AG04450 (cell line): ENCODE measurements at regions of chr6 and their contacts with region 1.

Region 1: DNA sequence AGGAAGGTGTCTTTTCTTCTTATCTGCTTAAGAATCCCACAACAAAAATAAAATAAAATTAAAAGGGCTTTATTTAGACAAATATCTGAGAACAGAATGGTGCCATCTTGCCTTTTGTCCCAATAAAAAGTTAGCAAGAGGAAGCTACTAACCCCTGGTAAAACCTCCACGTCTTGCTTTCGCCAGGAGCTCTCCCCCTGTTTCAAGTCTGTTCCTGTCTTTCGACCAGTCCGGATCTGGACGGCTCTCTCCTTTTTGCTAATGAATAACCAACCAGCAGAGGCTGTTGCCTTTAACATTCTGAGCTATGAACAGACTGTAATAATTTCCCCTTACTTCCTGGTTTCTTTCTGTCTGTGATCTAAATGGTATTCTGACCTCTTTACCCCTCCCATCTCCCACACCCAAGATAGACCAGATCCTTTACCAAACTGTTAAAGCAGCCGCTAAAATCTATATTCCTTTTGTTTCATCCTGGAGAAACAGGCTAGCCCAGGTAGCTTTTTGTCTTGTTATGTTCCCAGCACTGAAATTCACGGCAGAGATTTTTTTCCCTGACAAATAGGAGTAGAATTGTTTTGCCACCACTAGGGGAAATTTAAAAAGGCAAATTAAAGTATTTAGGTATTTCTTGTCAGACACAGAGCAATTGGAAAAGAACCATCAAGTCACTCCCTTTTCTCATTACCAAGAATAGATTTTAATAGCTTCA is at the start of gene FRK:
- DNase-seq: no peak
- H3K4me3 ChIP-seq: peak within 1 kb of the TSS; percentile 49
- H3K27ac ChIP-seq: peak within 1 kb of the TSS; percentile 47
- H3K27me3 ChIP-seq: no peaks in the 10 kb centered on the region
- CTCF ChIP-seq: peak; percentile 52
- polyA plus RNA-seq, gene FRK: 0.31 and 0.43 TPM in 2 replicates

Region 2: DNA sequence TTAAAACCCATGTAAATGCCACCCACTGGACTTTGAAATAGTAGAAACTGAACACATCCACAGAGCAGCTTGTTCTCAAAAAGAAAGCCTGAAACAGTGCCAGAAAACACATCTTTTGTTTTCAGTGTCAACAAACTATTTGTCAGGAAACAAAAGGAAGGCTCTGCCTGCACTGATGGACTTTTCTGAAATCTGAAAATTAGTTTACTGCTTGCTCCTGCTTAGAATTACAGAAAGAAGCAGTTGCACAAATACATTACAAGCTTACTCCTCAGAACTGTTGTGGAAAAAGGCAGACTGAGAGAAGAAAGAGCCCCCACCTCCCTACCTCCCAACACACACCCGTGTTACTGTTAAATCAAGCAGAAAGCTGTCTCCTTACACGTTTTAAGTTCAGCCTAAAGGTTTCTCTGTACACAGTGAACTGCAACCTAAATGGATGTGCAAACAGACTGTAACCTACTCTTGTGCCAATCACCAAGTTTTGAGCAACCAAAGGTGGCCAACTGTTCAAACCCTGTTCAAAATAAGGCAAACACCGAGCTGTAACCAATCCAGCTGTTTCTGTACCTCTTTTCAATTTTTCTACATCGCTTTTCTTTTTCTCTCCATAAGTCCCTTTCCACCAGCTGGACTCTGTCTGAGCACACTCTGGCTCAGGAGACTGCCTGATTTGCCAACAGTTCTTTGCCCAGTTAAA is 43.7 kb before region 1 on chr6:
- CTCF ChIA-PET with region 1: interaction called, 29 read pairs
- POLR2A ChIA-PET with region 1: no interaction called
- DNase-seq: peak; percentile 46
- H3K4me3 ChIP-seq: no peak overlapping the region
- H3K27ac ChIP-seq: no peak overlapping the region
- H3K27me3 ChIP-seq: no peaks in the 10 kb centered on the region
- CTCF ChIP-seq: no peak

Region 3: GRCh38 chr6:116070616-116071358 is 10.1 kb after region 1 on chr6:
- CTCF ChIA-PET with region 1: interaction called, 13 read pairs
- POLR2A ChIA-PET with region 1: interaction called, 6 read pairs
- DNase-seq: no peak
- H3K4me3 ChIP-seq: no peak overlapping the region
- H3K27ac ChIP-seq: no peak overlapping the region
- H3K27me3 ChIP-seq: no peaks in the 10 kb centered on the region
- CTCF ChIP-seq: no peak

Region 4: DNA sequence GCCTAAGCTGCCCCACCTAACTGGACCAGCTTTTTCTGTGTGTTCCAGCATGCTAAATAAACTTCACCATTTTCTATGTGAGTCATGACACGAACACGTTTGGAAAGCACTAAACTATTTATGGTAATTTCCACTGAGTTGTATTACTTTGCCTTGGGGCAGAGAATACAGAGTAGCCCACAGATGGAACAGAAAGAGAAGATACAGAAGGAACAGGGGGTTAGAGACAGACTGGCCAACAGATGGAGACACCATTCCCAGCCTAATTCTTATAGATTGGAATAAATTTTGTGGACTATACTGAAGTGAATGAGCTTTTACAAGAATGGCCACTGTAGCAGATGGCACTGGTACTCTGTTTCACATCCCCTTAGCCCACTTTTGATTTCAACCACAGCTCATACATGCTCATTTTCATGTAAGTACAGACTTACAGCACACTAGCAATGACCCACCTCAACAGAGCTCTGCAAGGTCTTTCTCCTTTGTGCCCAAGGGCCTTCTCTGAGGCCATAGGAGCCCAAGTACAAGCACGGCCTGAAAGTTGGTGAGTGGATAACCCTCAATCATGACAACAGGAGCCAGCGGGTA is 26.8 kb after region 1 on chr6:
- CTCF ChIA-PET with region 1: interaction called, 11 read pairs
- POLR2A ChIA-PET with region 1: no interaction called
- DNase-seq: no peak
- H3K4me3 ChIP-seq: no peak overlapping the region
- H3K27ac ChIP-seq: peak overlapping the region; percentile 60
- H3K27me3 ChIP-seq: no peaks in the 10 kb centered on the region
- CTCF ChIP-seq: peak; percentile 25

Region 5: GRCh38 chr6:116100419-116101301 is 39.9 kb after region 1 on chr6 and contains the start of gene NT5DC1:
- CTCF ChIA-PET with region 1: interaction called, 20 read pairs
- POLR2A ChIA-PET with region 1: interaction called, 3 read pairs
- DNase-seq: no peak
- H3K4me3 ChIP-seq: peak within 1 kb of the TSS; percentile 89
- H3K27ac ChIP-seq: peak within 1 kb of the TSS; percentile 65
- H3K27me3 ChIP-seq: no peaks in the 10 kb centered on the region
- CTCF ChIP-seq: peak; percentile 31
- polyA plus RNA-seq, gene NT5DC1: 20.9 and 23.2 TPM in 2 replicates